Sigmoid colon (tissue), 7 donors: ENCODE measurements at regions of chr14 and their contacts with region 1.

Region 1: GRCh38 chr14:24093901-24094761 is at the start of gene PCK2:
- DNase-seq: peak; percentile 98
- H3K4me3 ChIP-seq: peak within 1 kb of the TSS; percentile 77 to 95 (median 86)
- H3K27ac ChIP-seq: peak within 1 kb of the TSS; percentile 88 to 99 (median 89)
- H3K4me1 ChIP-seq: peaks cover 0 to 19% (median 9%) of the 10 kb centered on the region in 4 donors
- H3K27me3 ChIP-seq: no peaks in the 10 kb centered on the region
- CTCF ChIP-seq: peak in 2 of 4 experiments; percentile 15 to 16
- EP300 ChIP-seq: no peak
- POLR2A ChIP-seq: peak in 1 of 2 donors; percentile 81
- total RNA-seq, gene PCK2: 7.1 to 12.2 (median 9.2) TPM

Region 2: GRCh38 chr14:23631702-23632460 is 462.2 kb before region 1 on chr14:
- intact Hi-C with region 1: loop called (anchors 10 kb)
- DNase-seq: peak; percentile 84
- H3K4me3 ChIP-seq: no peak overlapping the region
- H3K27ac ChIP-seq: no peak overlapping the region
- H3K4me1 ChIP-seq: peaks cover 0 to 12% (median 4%) of the 10 kb centered on the region in 4 donors
- H3K27me3 ChIP-seq: no peaks in the 10 kb centered on the region
- CTCF ChIP-seq: peak; percentile 85 to 92 (median 90)
- EP300 ChIP-seq: no peak
- POLR2A ChIP-seq: no peak

Region 3: GRCh38 chr14:23984891-23985602 is 109.1 kb before region 1 on chr14:
- intact Hi-C with region 1: loop called (anchors 10 kb)
- DNase-seq: no peak
- H3K4me3 ChIP-seq: no peak overlapping the region
- H3K27ac ChIP-seq: peak overlapping the region in 1 of 4 donors; percentile 64
- H3K4me1 ChIP-seq: peaks cover 0 to 13% (median 4%) of the 10 kb centered on the region in 4 donors
- H3K27me3 ChIP-seq: no peaks in the 10 kb centered on the region
- CTCF ChIP-seq: no peak
- EP300 ChIP-seq: no peak
- POLR2A ChIP-seq: no peak

Region 4: DNA sequence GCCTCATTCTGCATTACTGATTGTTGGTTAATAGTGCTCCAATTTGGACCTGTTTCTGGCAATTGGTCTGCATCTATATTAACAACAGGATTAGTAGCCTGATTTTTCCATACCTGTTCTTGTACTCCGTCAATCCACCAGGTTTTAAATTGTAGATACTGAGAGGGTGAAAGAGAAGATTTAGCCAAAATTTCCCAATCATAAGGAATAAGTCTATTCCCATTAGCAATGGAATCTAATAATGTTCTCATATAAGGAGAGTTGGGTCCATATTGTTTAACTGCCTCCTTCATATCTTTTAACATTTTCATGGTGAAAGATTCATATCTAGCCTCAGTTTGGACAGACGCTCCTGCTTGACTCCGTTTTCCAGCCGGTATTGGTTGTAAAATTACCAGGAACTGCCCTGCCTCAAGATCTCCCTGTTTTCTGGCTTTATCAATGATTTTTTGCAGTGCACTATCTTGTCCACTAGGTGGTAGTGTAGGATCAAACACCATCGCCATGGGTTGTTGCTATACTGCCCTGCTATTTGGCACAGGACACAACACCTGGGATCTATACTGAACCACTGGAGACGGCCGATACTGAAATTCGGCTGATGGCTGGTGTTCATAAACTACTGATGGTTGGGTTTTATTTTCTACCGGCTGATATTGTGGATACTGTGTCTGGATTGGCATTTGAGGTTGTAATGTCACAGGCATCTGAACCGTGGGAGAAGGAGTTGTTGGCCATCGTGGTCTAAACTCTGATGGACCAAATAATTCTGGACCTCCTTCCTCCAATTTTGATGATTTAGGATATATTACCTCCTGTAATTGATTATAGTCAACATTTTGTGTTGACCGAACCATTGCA is 80.2 kb before region 1 on chr14:
- intact Hi-C with region 1: loop called (anchors 1 kb)
- DNase-seq: peak; percentile 72
- H3K4me3 ChIP-seq: no peak overlapping the region
- H3K27ac ChIP-seq: no peak overlapping the region
- H3K4me1 ChIP-seq: peaks cover 0 to 4% (median 2%) of the 10 kb centered on the region in 4 donors
- H3K27me3 ChIP-seq: no peaks in the 10 kb centered on the region
- CTCF ChIP-seq: peak; percentile 88 to 94 (median 93)
- EP300 ChIP-seq: no peak
- POLR2A ChIP-seq: no peak

Region 5: DNA sequence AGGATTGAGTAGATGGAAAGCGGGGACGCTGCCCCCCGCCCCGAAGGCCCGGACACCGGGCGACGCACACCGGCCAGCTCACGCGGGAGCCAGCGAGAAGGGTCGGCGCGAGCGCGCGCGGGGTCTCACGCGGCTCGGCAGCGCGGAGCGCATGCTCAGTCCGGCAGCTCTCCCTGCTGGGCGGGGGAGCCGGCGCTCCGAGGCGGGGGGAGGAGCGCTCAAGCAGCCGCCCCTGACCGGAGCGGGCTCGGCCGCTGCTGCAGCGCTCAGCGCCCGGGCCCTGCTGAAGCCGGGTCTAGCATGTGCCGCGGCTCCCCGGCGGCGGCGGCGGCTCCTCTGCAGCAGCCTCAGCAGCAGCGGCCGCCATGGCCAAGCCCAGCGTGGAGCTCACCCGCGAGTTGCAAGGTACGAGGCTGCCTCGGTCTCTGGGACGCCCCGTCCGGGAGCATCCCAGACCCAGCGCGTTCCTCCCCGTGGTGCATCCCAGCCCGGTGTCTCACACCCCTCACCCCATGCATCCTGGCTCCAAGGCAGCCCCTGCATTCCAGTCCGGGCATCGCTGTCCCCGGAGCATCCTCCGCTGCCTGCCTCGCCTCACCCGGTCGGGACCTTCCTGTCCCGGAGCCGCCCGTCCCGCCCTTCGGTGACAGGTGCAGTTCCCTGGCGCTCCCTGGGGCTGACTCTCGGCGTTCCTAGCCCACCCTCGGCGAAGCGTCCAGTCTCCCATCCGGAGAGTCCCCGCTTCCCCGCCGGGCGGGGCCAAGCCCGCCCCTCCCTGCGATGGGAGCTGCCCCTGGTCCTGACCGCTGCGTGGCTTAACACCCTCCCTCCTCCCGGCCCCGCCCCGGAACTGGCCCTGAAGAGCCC is 42.1 kb before region 1 on chr14 and contains the start of gene CARMIL3:
- intact Hi-C with region 1: loop called (anchors 2 kb)
- DNase-seq: peak; percentile 77
- H3K4me3 ChIP-seq: peak within 1 kb of the TSS; percentile 41 to 66 (median 55)
- H3K27ac ChIP-seq: peak within 1 kb of the TSS; percentile 43 to 72 (median 60)
- H3K4me1 ChIP-seq: peaks cover 0 to 16% (median 13%) of the 10 kb centered on the region in 4 donors
- H3K27me3 ChIP-seq: no peaks in the 10 kb centered on the region
- CTCF ChIP-seq: no peak
- EP300 ChIP-seq: no peak
- POLR2A ChIP-seq: no peak
- total RNA-seq, gene CARMIL3: 0.14 to 3.3 (median 0.62) TPM

Region 6: DNA sequence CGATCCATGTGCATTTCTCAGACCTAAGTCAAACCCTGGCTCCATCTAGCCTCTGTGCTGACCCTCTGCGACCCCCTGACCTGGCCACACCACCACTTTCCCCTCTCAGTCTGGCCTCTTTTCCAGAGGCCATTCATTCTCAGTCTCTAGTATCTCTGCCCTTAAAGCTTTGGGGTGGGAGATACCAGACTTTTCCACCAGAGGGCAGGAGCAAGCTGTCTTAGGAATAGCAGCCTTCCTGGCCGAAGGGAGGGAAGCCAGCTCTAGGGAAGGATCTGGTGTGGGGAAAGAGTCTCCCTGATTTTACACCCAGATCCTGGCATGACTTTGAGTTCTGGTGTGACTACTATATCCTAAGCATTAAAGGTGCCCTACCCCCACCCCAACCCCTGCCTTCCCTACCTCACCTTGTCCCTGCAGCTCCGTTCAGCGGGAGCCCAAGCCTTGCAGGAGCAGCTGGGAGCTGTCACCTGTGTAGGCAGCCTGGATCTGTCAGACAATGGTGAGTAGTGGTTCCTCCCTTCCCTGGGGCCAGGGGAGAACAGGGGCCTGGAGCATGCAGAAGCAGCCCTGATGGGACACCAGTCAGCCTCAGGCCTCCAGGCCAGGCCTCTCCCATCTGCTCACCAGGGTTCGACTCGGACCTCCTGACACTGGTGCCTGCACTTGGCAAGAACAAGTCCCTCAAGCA is 35.7 kb before region 1 on chr14:
- intact Hi-C with region 1: loop called (anchors 1 kb)
- DNase-seq: peak; percentile 83
- H3K4me3 ChIP-seq: no peak overlapping the region
- H3K27ac ChIP-seq: no peak overlapping the region
- H3K4me1 ChIP-seq: peaks cover 0 to 4% (median 0%) of the 10 kb centered on the region in 4 donors
- H3K27me3 ChIP-seq: no peaks in the 10 kb centered on the region
- CTCF ChIP-seq: peak; percentile 76 to 96 (median 84)
- EP300 ChIP-seq: no peak
- POLR2A ChIP-seq: no peak

Region 7: GRCh38 chr14:24108336-24108874 is 14.3 kb after region 1 on chr14:
- intact Hi-C with region 1: loop called (anchors 1 kb)
- DNase-seq: no peak
- H3K4me3 ChIP-seq: no peak overlapping the region
- H3K27ac ChIP-seq: peak overlapping the region in 1 of 4 donors; percentile 0
- H3K4me1 ChIP-seq: peaks cover 0 to 12% (median 2%) of the 10 kb centered on the region in 4 donors
- H3K27me3 ChIP-seq: no peaks in the 10 kb centered on the region
- CTCF ChIP-seq: no peak
- EP300 ChIP-seq: no peak
- POLR2A ChIP-seq: no peak